ENCODE measurements at regions of chr10 and their contacts with region 1.

Region 1: GRCh38 chr10:102652170-102652916 is 8.1 kb downstream of the TRIM8 start:
- DNase-seq: no peak
- H3K4me3 Mint-ChIP-seq: peak overlapping the region; percentile 44
- H3K27ac Mint-ChIP-seq: peak overlapping the region; percentile 90
- H3K4me1 Mint-ChIP-seq: peaks cover 74% of the 10 kb centered on the region
- H3K27me3 Mint-ChIP-seq: no peaks in the 10 kb centered on the region

Region 2: GRCh38 chr10:102384053-102384452 is 268.3 kb before region 1 on chr10:
- CTCF ChIA-PET with region 1: no interaction called
- POLR2A ChIA-PET with region 1: no interaction called
- DNase-seq: no peak
- H3K4me3 Mint-ChIP-seq: no peak overlapping the region
- H3K27ac Mint-ChIP-seq: no peak overlapping the region
- H3K4me1 Mint-ChIP-seq: no peaks in the 10 kb centered on the region
- H3K27me3 Mint-ChIP-seq: no peaks in the 10 kb centered on the region

Region 3: DNA sequence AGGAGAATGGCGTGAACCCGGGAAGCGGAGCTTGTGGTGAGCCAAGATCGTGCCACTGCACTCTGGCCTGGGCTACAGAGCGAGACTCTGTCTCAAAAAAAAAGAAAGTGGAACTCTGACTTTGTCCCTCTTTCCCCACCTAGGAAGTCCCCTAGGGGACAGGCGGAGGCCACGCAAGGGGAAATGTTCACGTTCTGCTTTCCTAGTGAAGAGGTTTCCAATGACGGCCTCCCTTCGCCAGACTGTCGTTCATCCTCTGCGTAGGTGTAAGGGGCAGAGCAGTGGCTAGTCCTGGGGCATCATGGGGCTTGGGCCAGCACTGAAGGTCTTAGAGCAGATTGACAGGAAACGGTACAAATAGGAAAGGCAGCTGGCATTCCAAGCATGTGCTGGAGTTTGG is 118.0 kb before region 1 on chr10:
- CTCF ChIA-PET with region 1: no interaction called
- POLR2A ChIA-PET with region 1: no interaction called
- DNase-seq: no peak
- H3K4me3 Mint-ChIP-seq: no peak overlapping the region
- H3K27ac Mint-ChIP-seq: no peak overlapping the region
- H3K4me1 Mint-ChIP-seq: no peaks in the 10 kb centered on the region
- H3K27me3 Mint-ChIP-seq: no peaks in the 10 kb centered on the region

Region 4: GRCh38 chr10:102669206-102670064 is 17.1 kb after region 1 on chr10:
- CTCF ChIA-PET with region 1: interaction called, 20 read pairs
- POLR2A ChIA-PET with region 1: interaction called, 82 read pairs
- DNase-seq: no peak
- H3K4me3 Mint-ChIP-seq: no peak overlapping the region
- H3K27ac Mint-ChIP-seq: no peak overlapping the region
- H3K4me1 Mint-ChIP-seq: peaks cover 24% of the 10 kb centered on the region
- H3K27me3 Mint-ChIP-seq: no peaks in the 10 kb centered on the region